ENCODE measurements at regions of chr14 and their contacts with region 1.

Region 1: GRCh38 chr14:23793532-23793931 is 157.4 kb downstream of the DHRS2 start:
- DNase-seq: no peak
- ATAC-seq: no peak
- H3K4me3 ChIP-seq: no peak overlapping the region
- H3K27ac ChIP-seq: no peak overlapping the region
- H3K4me1 ChIP-seq: no peaks in the 10 kb centered on the region
- H3K27me3 ChIP-seq: no peaks in the 10 kb centered on the region
- CTCF ChIP-seq: no peak
- POLR2A ChIP-seq: no peak
- RAD21 ChIP-seq: no peak

Region 2: GRCh38 chr14:23861666-23862065 is 68.1 kb after region 1 on chr14:
- CTCF ChIA-PET with region 1: no interaction called
- POLR2A ChIA-PET with region 1: no interaction called
- RAD21 ChIA-PET with region 1: no interaction called
- intact Hi-C with region 1: loop called (anchors 10 kb)
- DNase-seq: no peak
- ATAC-seq: no peak
- H3K4me3 ChIP-seq: no peak overlapping the region
- H3K27ac ChIP-seq: no peak overlapping the region
- H3K4me1 ChIP-seq: no peaks in the 10 kb centered on the region
- H3K27me3 ChIP-seq: no peaks in the 10 kb centered on the region
- CTCF ChIP-seq: no peak
- POLR2A ChIP-seq: no peak
- RAD21 ChIP-seq: no peak

Region 3: GRCh38 chr14:23903442-23903841 is 109.9 kb after region 1 on chr14:
- CTCF ChIA-PET with region 1: no interaction called
- POLR2A ChIA-PET with region 1: no interaction called
- RAD21 ChIA-PET with region 1: no interaction called
- intact Hi-C with region 1: no loop called
- DNase-seq: no peak
- ATAC-seq: no peak
- H3K4me3 ChIP-seq: no peak overlapping the region
- H3K27ac ChIP-seq: no peak overlapping the region
- H3K4me1 ChIP-seq: no peaks in the 10 kb centered on the region
- H3K27me3 ChIP-seq: peaks cover 4% of the 10 kb centered on the region; the same call in 1 of the 2 replicates
- CTCF ChIP-seq: no peak
- POLR2A ChIP-seq: no peak
- RAD21 ChIP-seq: no peak

Region 4: DNA sequence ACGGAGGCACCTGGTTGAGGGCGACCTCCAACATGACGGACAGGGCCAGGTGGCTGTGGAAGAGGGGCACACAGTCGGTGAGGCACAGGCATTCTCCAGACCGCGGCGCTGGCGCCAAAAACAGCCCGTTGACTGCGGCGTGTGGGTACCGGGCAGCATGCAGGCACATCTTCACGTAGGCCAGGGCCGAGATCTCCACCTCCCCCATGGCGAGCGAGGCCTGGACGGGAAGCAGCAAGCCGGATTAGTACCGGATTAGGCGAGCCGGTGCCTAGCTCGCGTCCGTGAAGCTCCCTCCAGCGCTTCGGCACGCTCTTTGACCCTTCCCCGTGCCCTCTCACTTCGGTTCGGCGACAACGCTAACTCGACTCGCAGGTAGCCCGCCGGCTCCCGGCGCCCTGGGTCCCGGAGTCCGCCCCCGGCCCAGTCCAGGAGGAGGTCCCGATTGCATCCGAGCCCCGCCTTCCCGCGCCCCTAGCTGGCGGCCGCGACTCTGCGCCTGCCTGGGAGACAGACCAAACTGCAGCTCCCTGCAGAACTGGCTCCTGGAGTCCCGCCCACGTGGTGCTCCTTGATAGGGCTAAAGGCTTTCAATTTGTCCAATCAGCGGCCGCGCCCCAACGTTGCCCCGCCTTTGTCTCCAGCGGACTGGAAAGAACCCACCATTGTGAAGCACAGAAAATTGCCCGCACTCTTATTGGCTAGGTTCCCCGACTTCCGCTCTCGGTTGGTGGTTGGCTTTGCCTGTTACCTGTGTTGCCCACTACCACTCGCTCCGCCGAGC is 347.8 kb after region 1 on chr14 and contains the start of gene EMC9:
- CTCF ChIA-PET with region 1: no interaction called
- POLR2A ChIA-PET with region 1: no interaction called
- RAD21 ChIA-PET with region 1: no interaction called
- intact Hi-C with region 1: no loop called
- DNase-seq: peak; percentile 99
- ATAC-seq: peak; percentile 88
- H3K4me3 ChIP-seq: peak within 1 kb of the TSS; percentile 66 to 87
- H3K27ac ChIP-seq: peak within 1 kb of the TSS; percentile 91
- H3K4me1 ChIP-seq: peaks cover 26 to 50% of the 10 kb centered on the region in 2 experiments
- H3K27me3 ChIP-seq: no peaks in the 10 kb centered on the region
- CTCF ChIP-seq: peak in 1 of 3 experiments; percentile 62; a peak in 3 of 6 replicates
- POLR2A ChIP-seq: peak; percentile 96
- RAD21 ChIP-seq: no peak
- total RNA-seq, gene EMC9: 42.0 TPM

Measured in HCT116 (cell line).